Activated naive CD4-positive, alpha-beta T cell treated with anti-CD3 and anti-CD28 coated beads, Interleukin-2, amount 10 ng/mL, durations not matched to agents 7 days and 5 days (primary cell): ENCODE measurements at regions of chr4 and their contacts with region 1.

Region 1: GRCh38 chr4:26410385-26411293 is 79.6 kb downstream of the CCKAR start:
- DNase-seq: peak; percentile 44
- H3K4me3 Mint-ChIP-seq: no peak overlapping the region
- H3K27ac Mint-ChIP-seq: peak overlapping the region; percentile 37
- H3K4me1 Mint-ChIP-seq: peaks cover 4% of the 10 kb centered on the region
- H3K27me3 Mint-ChIP-seq: no peaks in the 10 kb centered on the region

Region 2: GRCh38 chr4:25986807-25987206 is 423.8 kb before region 1 on chr4:
- CTCF ChIA-PET with region 1: interaction called, 17 read pairs
- DNase-seq: no peak
- H3K4me3 Mint-ChIP-seq: no peak overlapping the region
- H3K27ac Mint-ChIP-seq: no peak overlapping the region
- H3K4me1 Mint-ChIP-seq: peaks cover 11% of the 10 kb centered on the region
- H3K27me3 Mint-ChIP-seq: peaks cover 15% of the 10 kb centered on the region

Region 3: GRCh38 chr4:26028793-26029567 is 381.7 kb before region 1 on chr4:
- CTCF ChIA-PET with region 1: interaction called, 28 read pairs
- DNase-seq: peak; percentile 75
- H3K4me3 Mint-ChIP-seq: no peak overlapping the region
- H3K27ac Mint-ChIP-seq: no peak overlapping the region
- H3K4me1 Mint-ChIP-seq: peaks cover 9% of the 10 kb centered on the region
- H3K27me3 Mint-ChIP-seq: peaks cover 22% of the 10 kb centered on the region

Region 4: DNA sequence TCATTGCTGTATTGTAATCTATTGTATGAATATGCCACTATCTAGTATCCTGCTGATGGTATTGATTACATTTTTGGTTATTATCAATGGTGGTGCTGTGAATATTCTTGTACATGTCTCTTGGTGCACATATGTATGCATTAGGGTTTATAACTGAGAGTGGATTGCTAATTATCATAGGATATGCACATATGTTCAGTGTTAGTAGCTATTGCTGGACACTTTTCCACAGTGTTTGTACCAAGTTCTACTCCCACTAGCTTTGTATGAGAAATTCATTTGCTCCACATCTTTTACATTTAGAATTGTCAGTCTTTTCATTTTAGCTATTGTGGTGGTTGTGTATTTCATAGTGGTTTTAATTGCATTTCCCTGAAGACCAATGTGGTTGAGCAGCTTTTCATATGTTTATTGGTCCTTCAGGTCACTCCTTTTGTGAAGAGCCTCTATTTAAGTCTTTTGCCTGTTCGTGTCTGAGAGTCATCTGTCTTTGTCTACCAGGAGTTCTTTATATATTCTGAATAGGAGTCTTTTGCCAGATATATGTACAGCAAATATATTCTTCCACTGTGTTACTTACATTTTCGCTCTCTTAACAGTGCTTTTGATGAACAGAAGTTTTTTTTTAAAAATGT is 260.4 kb after region 1 on chr4:
- CTCF ChIA-PET with region 1: no interaction called
- DNase-seq: no peak
- H3K4me3 Mint-ChIP-seq: no peak overlapping the region
- H3K27ac Mint-ChIP-seq: no peak overlapping the region
- H3K4me1 Mint-ChIP-seq: no peaks in the 10 kb centered on the region
- H3K27me3 Mint-ChIP-seq: no peaks in the 10 kb centered on the region

Region 5: GRCh38 chr4:26724534-26724933 is 313.9 kb after region 1 on chr4:
- CTCF ChIA-PET with region 1: no interaction called
- DNase-seq: peak; percentile 25
- H3K4me3 Mint-ChIP-seq: no peak overlapping the region
- H3K27ac Mint-ChIP-seq: no peak overlapping the region
- H3K4me1 Mint-ChIP-seq: peaks cover 10% of the 10 kb centered on the region
- H3K27me3 Mint-ChIP-seq: no peaks in the 10 kb centered on the region